HepG2 (cell line): ENCODE measurements at regions of chr12 and their contacts with region 1.

Region 1: DNA sequence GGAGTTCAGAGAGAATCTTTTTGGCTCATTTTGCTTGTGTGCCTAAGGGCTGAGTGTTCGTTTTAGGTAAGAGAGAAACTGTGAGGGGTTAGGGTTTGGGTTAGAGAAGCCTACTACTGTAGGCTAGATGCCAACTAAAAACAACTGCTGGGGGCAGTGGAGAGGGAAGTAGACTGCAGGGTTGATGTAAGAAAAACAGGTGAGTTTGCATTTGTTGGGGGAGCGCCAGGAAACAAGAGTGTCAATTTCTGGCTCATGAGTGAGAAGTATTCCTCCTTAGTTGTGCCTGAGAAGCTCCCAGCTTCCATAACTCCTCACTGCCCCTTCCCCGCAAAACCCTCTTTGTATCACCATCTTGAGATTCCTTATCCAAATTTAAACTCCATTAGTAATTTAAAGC is 92.3 kb downstream of the DERA start:
- DNase-seq: no peak
- ATAC-seq: no peak
- H3K4me3 ChIP-seq: no peak overlapping the region
- H3K27ac ChIP-seq: no peak overlapping the region
- H3K4me1 ChIP-seq: peaks cover 8% of the 10 kb centered on the region
- H3K27me3 ChIP-seq: no peaks in the 10 kb centered on the region
- CTCF ChIP-seq: no peak
- EP300 ChIP-seq: no peak
- POLR2A ChIP-seq: no peak
- RAD21 ChIP-seq: no peak

Region 2: GRCh38 chr12:15962760-15963159 is 40.7 kb before region 1 on chr12:
- CTCF ChIA-PET with region 1: no interaction called
- POLR2A ChIA-PET with region 1: no interaction called
- in situ Hi-C with region 1: no loop called
- intact Hi-C with region 1: loop called (anchors 1 kb)
- DNase-seq: no peak
- ATAC-seq: no peak
- H3K4me3 ChIP-seq: no peak overlapping the region
- H3K27ac ChIP-seq: no peak overlapping the region
- H3K4me1 ChIP-seq: no peaks in the 10 kb centered on the region
- H3K27me3 ChIP-seq: no peaks in the 10 kb centered on the region
- CTCF ChIP-seq: no peak
- EP300 ChIP-seq: no peak
- POLR2A ChIP-seq: no peak
- RAD21 ChIP-seq: no peak

Region 3: DNA sequence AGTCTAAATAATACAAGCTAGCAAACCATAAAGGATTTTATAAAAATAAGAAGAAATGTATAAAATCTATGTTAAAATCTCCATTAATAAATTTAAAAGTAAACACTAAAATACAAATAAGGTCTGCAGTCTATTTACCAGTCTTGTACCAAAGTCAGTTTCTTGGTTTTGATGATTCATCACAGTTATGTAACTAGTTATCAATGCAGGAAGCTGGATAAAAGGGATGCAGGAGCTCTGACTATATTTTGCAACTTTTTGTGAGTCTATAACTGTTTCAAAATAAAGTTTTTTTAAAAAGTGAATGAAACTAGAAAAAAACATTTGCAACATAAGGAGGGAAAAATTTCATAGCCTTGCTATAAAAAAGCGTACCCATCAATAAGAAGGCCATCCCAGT is 59.2 kb after region 1 on chr12:
- CTCF ChIA-PET with region 1: no interaction called
- POLR2A ChIA-PET with region 1: no interaction called
- in situ Hi-C with region 1: no loop called
- intact Hi-C with region 1: loop called (anchors 2 kb)
- DNase-seq: no peak
- ATAC-seq: no peak
- H3K4me3 ChIP-seq: no peak overlapping the region
- H3K27ac ChIP-seq: no peak overlapping the region
- H3K4me1 ChIP-seq: no peaks in the 10 kb centered on the region
- H3K27me3 ChIP-seq: no peaks in the 10 kb centered on the region; a peak in 1 of 5 replicates
- CTCF ChIP-seq: no peak
- EP300 ChIP-seq: no peak
- POLR2A ChIP-seq: no peak
- RAD21 ChIP-seq: no peak